PC-9 (cell line): ENCODE measurements at regions of chr10 and their contacts with region 1.

Region 1: GRCh38 chr10:32055813-32056600 is at the start of gene KIF5B:
- DNase-seq: peak; percentile 54 to 86
- H3K4me3 ChIP-seq: peak within 1 kb of the TSS; percentile 91
- H3K27ac ChIP-seq: peak within 1 kb of the TSS; percentile 66
- H3K4me1 ChIP-seq: peaks cover 25% of the 10 kb centered on the region
- H3K27me3 ChIP-seq: no peaks in the 10 kb centered on the region
- CTCF ChIP-seq: no peak
- total RNA-seq, gene KIF5B: 64.9 and 76.9 TPM in 2 replicates

Region 2: GRCh38 chr10:32155042-32155531 is 99.1 kb after region 1 on chr10:
- CTCF ChIA-PET with region 1: interaction called, 3 read pairs
- POLR2A ChIA-PET with region 1: no interaction called
- intact Hi-C with region 1: loop called (anchors 2 kb)
- DNase-seq: peak; percentile 17 to 72
- H3K4me3 ChIP-seq: peak overlapping the region; percentile 22; the same call in 1 of the 2 replicates
- H3K27ac ChIP-seq: peak overlapping the region; percentile 72
- H3K4me1 ChIP-seq: peaks cover 26% of the 10 kb centered on the region
- H3K27me3 ChIP-seq: no peaks in the 10 kb centered on the region
- CTCF ChIP-seq: no peak

Region 3: GRCh38 chr10:32378363-32379317 is 322.6 kb after region 1 on chr10:
- CTCF ChIA-PET with region 1: no interaction called
- POLR2A ChIA-PET with region 1: interaction called, 4 read pairs
- intact Hi-C with region 1: loop called (anchors 10 kb)
- DNase-seq: peak; percentile 68 to 84
- H3K4me3 ChIP-seq: peak overlapping the region; percentile 88
- H3K27ac ChIP-seq: peak overlapping the region; percentile 79
- H3K4me1 ChIP-seq: peaks cover 17% of the 10 kb centered on the region
- H3K27me3 ChIP-seq: no peaks in the 10 kb centered on the region
- CTCF ChIP-seq: no peak